Vagina (tissue), 2 donors: ENCODE measurements at regions of chr1 and their contacts with region 1.

Region 1: DNA sequence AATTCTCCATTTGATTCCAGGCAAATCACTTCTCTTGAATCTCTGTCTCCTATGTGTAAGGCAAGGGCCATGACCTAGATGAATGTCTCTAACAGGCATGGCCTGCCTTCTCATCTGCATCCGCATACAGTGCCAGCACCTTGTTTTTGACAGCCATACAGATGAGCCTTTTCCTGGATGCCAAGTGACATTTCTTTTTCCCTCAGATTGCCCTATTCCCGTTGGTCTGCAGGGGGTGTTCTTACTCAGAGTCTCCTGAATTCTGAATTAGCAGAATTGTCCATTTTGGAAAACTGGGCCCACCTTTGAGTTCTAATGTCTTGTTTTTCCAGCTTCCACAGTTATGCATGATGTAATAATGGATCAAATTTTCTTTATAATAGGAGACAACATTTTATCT is 88.0 kb upstream of the ADAR start:
- DNase-seq: no peak
- H3K4me3 ChIP-seq: no peak overlapping the region
- H3K27ac ChIP-seq: no peak overlapping the region
- H3K4me1 ChIP-seq: no peaks in the 10 kb centered on the region
- H3K27me3 ChIP-seq: no peaks in the 10 kb centered on the region
- CTCF ChIP-seq: no peak
- POLR2A ChIP-seq: no peak

Region 2: DNA sequence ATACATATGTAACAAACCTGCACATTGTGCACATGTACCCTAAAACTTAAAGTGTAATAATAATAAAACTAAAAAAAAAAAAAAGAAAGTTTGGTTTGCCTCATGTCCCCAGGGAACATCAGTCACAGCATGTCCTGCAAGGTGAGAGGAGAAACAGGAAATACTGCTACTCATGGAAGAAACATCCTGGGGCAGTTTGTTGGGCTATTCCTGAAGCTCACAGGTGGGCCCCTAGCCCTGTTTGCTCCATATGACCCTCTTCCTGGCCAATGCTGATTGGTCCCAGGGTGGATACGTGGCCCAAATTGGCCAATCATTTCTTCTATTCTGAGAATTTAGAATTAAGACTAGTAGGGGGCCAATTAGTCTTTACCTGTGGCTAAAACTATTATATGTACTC is 15.5 kb after region 1 on chr1:
- intact Hi-C with region 1: loop called (anchors 2 kb)
- DNase-seq: no peak
- H3K4me3 ChIP-seq: no peak overlapping the region
- H3K27ac ChIP-seq: no peak overlapping the region
- H3K4me1 ChIP-seq: no peaks in the 10 kb centered on the region
- H3K27me3 ChIP-seq: no peaks in the 10 kb centered on the region
- CTCF ChIP-seq: no peak
- POLR2A ChIP-seq: no peak

Region 3: DNA sequence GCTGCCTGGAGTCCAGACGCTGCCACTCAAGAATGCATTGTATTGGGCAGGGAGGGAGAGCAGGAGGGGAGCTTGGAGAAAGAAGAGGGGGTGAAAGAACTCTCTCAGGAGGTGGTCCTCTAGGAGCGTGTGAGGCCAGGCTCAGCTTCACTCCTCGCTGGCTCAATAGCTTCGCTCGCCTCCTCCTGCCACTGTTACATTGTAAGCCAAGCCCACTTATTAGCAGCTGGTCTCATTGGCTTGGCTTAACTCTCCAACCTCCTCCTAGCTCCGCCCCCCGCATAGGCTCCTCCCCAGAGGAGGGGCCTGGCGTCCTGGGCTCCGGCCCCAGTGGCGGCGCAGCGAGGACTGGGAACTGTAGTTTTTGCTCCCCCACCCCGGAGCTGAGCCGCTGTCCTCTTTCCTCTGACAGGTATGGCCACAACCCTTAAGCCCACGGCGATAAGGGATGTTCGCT is 174.2 kb after region 1 on chr1 and contains the start of gene KCNN3:
- intact Hi-C with region 1: loop called (anchors 10 kb)
- DNase-seq: peak in 1 of 2 donors; percentile 94
- H3K4me3 ChIP-seq: peak within 1 kb of the TSS; percentile 41
- H3K27ac ChIP-seq: peak within 1 kb of the TSS; percentile 50
- H3K4me1 ChIP-seq: peaks cover 34% of the 10 kb centered on the region
- H3K27me3 ChIP-seq: no peaks in the 10 kb centered on the region
- CTCF ChIP-seq: no peak
- POLR2A ChIP-seq: peak in 1 of 2 donors; percentile 27
- total RNA-seq, gene KCNN3: 7.4 TPM